Spleen (tissue), 13 donors: ENCODE measurements at regions of chr1 and their contacts with region 1.

Region 1: DNA sequence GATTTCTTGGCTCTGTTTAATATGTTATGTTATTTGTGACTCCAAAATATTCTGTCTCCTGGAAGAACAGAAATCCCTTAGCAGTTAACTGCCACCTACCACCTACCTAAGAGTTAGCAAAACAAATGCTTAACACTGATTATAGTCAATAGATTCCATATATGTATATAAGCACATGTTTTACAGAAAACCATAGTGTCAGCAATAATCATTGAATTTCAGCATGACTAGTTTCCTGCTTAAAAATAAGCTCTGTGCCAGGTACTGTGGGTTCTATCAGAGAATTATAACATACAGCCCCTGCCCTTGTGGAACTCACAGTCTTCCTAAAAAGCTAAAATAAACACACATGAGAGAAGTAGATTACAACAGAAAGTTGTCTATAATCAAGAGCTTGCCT is 561.9 kb upstream of the CAMK1G start:
- DNase-seq: no peak
- H3K4me3 ChIP-seq: no peak overlapping the region
- H3K27ac ChIP-seq: no peak overlapping the region
- H3K4me1 ChIP-seq: no peaks in the 10 kb centered on the region
- H3K27me3 ChIP-seq: no peaks in the 10 kb centered on the region
- CTCF ChIP-seq: no peak
- POLR2A ChIP-seq: no peak

Region 2: DNA sequence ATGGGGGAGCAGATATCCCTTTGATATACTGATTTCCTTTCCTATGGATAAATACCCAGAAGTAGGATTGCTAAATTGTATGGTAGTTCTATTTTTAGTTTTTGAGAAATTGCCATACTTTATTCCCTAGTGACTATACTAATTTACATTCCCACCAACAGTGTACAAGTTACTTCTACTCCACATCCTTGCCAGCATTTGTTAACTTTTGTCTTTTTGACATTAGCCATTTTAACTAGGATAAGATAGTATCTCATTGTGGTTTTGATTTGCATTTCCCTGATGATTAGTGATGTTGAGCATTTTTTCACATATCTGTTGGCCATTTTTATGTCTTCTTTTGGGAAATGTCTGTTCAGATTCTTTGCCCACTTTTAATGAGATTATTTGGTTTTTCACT is 58.8 kb before region 1 on chr1:
- intact Hi-C with region 1: loop called (anchors 2 kb)
- DNase-seq: no peak
- H3K4me3 ChIP-seq: no peak overlapping the region
- H3K27ac ChIP-seq: no peak overlapping the region
- H3K4me1 ChIP-seq: no peaks in the 10 kb centered on the region
- H3K27me3 ChIP-seq: no peaks in the 10 kb centered on the region
- CTCF ChIP-seq: no peak
- POLR2A ChIP-seq: no peak